Activated CD8-positive, alpha-beta memory T cell treated with anti-CD3 and anti-CD28 coated beads, Interleukin-2, amount 10 ng/mL, durations not matched to agents 7 days and 5 days (primary cell): ENCODE measurements at regions of chr6 and their contacts with region 1.

Region 1: GRCh38 chr6:53794720-53795253 is at the start of gene LRRC1:
- DNase-seq: peak; percentile 91
- ATAC-seq: peak; percentile 84
- H3K4me3 Mint-ChIP-seq: peak within 1 kb of the TSS; percentile 89
- H3K27ac Mint-ChIP-seq: peak within 1 kb of the TSS; percentile 83
- H3K4me1 Mint-ChIP-seq: peaks cover 24% of the 10 kb centered on the region
- H3K27me3 Mint-ChIP-seq: peaks cover 46% of the 10 kb centered on the region
- total RNA-seq, gene LRRC1: 4.5 to 4.6 TPM

Region 2: DNA sequence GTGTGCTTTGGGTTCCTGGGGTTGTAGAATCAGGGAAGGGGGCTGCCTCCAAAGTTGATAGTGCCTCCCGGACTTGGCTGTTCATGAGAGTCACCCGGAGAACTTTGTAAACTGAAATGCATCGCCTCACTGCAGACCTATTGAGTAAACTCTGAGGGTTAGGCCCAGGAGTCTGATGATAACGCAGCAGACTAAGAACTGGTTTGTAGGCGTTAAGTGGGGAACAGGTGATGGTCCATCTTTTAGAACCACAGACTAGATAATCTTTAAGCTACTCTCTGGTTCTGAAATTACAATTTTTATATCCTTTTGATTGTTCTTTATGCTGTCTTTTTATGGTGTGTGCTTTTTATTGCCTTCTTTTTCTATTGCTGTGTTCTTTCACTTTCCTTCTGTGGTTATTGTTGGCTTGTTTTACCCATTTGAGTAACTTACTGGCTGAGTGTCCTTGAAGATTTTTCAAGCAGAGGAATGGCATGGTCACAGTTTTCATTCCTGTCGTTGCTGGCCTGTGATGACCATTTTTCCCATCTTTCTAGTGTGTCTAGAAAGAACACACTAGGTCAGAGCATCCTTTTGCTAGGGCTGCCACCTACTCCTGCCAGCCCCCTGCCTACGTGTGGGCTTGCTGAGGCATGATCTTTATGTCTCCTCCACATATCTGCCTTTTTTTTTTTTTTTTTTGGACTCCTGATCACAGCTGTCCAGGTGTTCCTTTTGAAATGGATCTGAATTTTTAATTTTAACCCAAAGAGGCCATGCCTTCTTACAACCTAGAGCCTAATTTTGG is 30.9 kb after region 1 on chr6:
- CTCF ChIA-PET with region 1: no interaction called
- DNase-seq: no peak
- ATAC-seq: no peak
- H3K4me3 Mint-ChIP-seq: no peak overlapping the region
- H3K27ac Mint-ChIP-seq: no peak overlapping the region
- H3K4me1 Mint-ChIP-seq: peaks cover 7% of the 10 kb centered on the region
- H3K27me3 Mint-ChIP-seq: no peaks in the 10 kb centered on the region

Region 3: DNA sequence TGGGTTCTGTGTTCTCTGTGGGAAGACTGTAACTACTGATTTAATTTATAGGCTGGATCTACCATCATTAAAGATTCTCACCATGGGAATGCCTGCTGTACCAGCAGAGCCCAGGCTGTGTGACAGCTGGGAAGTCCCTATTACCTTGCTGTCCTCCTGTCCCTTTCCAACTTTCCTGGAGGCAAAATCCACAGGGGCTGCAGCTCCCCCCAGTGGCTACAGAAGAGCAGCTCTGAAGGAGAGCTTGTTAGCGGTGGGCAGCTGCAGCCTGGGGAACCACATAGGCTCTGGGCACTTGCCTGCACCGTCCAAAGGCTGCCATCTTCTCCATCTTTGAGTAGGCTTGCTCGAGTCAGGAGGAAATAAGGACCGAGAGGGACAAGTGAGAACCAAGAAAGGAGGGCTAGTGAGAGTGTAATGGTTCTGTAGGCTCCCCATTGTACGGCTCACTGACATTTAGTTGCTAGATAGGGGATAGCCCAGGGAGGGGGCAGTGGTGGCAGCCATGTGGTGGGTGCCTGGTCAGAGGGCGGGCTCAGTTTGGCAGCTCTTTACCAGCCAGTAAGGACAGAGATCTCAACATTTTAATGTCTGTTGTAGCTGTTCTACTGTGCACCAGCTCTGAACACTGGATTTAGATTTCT is 161.4 kb after region 1 on chr6:
- CTCF ChIA-PET with region 1: interaction called, 11 read pairs
- DNase-seq: peak; percentile 51
- ATAC-seq: peak; percentile 58
- H3K4me3 Mint-ChIP-seq: no peak overlapping the region
- H3K27ac Mint-ChIP-seq: no peak overlapping the region
- H3K4me1 Mint-ChIP-seq: no peaks in the 10 kb centered on the region
- H3K27me3 Mint-ChIP-seq: peaks cover 27% of the 10 kb centered on the region